ENCODE measurements at regions of chr3 and their contacts with region 1.

Region 1: GRCh38 chr3:167814441-167814951 is 79.0 kb downstream of the SERPINI1 start:
- DNase-seq: peak in 1 of 2 donors; percentile 50
- ATAC-seq: peak; percentile 84
- H3K4me3 ChIP-seq: no peak overlapping the region
- H3K27ac ChIP-seq: peak overlapping the region in 1 of 2 donors; percentile 16
- H3K4me1 ChIP-seq: peaks cover 3 to 11% of the 10 kb centered on the region in 2 donors
- H3K27me3 ChIP-seq: no peaks in the 10 kb centered on the region

Region 2: GRCh38 chr3:167734498-167735232 is 79.8 kb before region 1 on chr3 and contains the start of gene PDCD10:
- intact Hi-C with region 1: loop called (anchors 1 to 5 kb)
- DNase-seq: peak; percentile 99
- ATAC-seq: peak; percentile 99
- H3K4me3 ChIP-seq: peak within 1 kb of the TSS; percentile 81
- H3K27ac ChIP-seq: peak within 1 kb of the TSS; percentile 29 to 91
- H3K4me1 ChIP-seq: no peaks in the 10 kb centered on the region
- H3K27me3 ChIP-seq: no peaks in the 10 kb centered on the region
- total RNA-seq, gene PDCD10: 45.2 to 54.5 TPM

Region 3: DNA sequence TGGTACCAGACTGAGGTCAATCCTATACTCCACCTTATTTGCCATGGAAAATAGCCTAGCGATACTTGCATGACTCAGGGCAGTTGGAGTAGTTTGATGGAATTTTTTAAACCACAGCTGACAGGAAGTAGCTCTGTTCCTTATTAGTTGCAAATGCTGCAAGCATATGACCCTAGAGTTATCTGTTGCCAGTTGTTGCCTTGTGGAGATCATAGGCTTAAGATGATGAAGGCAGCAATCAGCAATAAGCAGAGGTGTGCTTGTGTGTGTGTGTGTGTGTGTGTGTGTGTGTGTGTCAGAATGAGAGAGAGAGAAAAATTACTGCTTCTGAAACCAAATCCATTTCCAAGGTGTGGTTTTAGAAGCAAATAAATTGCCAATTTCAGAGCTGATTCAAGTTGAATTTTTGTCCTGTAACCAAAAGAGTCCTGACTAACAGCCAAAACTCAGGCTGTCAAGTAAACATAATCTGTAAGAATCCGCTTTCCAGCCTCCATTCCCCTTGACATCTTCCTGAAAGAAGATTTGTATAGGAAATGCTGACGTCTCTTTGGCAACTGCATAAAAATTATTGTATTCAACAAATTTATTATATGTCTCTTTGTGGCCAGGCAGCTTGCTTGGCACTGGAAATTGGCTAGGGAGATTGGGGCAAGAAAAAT is 62.3 kb after region 1 on chr3:
- intact Hi-C with region 1: loop called in 1 of 2 experiments (anchors 10 kb)
- DNase-seq: no peak
- ATAC-seq: peak; percentile 83
- H3K4me3 ChIP-seq: no peak overlapping the region
- H3K27ac ChIP-seq: peak overlapping the region; percentile 28 to 71
- H3K4me1 ChIP-seq: no peaks in the 10 kb centered on the region
- H3K27me3 ChIP-seq: no peaks in the 10 kb centered on the region